ENCODE measurements at regions of chr5 and their contacts with region 1.

Region 1: DNA sequence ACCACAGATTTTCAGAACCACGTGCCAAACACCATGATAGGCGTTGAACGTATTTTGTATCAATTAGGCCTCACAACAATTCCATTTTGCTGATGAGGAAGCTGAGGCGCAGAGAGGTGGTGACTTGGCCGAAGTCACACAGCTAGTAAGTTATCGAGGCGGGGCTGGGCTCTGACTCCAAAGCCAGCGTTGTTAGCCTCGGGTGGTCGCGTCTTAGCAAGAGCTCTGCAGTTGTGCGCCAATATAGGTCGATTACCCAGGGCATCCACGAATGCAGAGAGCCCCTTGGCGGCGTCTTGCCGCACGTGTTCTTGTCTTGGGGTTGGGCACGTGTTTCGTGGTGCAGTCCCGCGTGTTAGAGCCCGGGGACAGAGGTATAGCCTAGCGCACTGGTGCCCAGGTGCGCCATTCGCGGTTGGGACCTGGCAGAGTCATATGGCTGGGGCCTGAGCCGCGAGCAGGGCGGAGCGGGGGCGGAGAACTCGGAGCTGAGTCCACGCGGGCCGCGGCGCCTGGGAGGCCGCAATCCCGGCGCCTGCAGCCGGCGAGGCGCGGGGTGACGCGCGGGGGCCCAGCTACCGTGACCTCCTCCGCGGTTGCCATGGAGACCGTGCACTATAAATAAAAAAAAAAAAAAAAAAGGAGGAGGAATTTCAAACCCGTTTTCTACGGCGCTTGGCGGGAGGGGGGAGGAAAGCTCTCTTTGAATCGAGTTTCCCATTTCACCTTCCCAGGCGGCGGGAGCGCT is 62.3 kb downstream of the CXXC5 start:
- DNase-seq: no peak
- ATAC-seq: peak; percentile 56
- H3K4me3 ChIP-seq: peak overlapping the region; percentile 79
- H3K27ac ChIP-seq: no peak overlapping the region
- H3K4me1 ChIP-seq: no peaks in the 10 kb centered on the region; the same call in 1 of the 2 replicates
- H3K27me3 ChIP-seq: 0 out of 2 replicates have a peak, but pooled peaks cover 5% of the 10 kb centered on the region
- CTCF ChIP-seq: no peak

Region 2: DNA sequence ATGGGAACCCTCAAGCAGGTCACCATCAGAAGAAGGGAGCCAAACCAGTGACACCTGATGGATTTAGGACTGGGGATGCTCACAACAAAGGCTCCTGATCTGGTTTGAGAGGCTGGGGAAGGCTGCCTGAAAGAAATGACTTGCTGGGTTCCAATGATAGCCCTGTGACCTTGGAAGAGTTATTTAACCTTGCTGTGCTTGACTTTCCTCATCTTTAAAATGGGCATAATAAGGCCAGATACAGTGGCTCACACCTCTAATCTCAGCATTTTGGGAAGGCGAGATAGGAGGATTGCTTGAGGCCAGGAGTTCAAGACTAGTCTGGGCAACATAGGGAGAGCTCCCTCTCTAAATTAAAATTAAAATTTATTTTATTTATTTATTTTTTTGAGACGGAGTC is 21.5 kb after region 1 on chr5:
- CTCF ChIA-PET with region 1: no interaction called
- POLR2A ChIA-PET with region 1: interaction called, 12 read pairs
- intact Hi-C with region 1: no loop called
- DNase-seq: no peak
- ATAC-seq: no peak
- H3K4me3 ChIP-seq: no peak overlapping the region
- H3K27ac ChIP-seq: no peak overlapping the region
- H3K4me1 ChIP-seq: no peaks in the 10 kb centered on the region
- H3K27me3 ChIP-seq: no peaks in the 10 kb centered on the region
- CTCF ChIP-seq: no peak

Measured in PC-3 (cell line).